ENCODE measurements at regions of chr9 and their contacts with region 1.

Region 1: DNA sequence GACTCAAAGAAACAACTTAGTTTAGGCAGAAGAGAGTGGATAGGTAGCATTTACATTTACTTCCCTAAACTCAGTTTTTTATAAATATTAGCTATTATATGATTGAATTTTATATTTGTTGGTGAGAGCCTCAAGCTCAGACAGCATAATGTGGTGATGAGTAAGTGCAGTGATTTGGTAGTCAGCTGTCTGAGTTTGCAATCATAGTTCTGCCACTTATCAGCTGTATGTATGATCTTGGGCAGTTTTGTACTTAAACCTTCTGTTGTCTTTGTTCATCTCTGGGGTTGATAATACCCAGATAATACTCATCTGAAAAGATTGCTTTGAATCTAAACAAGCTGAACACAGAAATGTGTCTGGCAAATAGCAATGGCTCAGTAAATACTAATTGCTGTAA is 108.8 kb downstream of the ANXA1 start:
- DNase-seq: no peak
- ATAC-seq: no peak
- H3K4me3 ChIP-seq: no peak overlapping the region
- H3K4me3 Mint-ChIP-seq: no peak overlapping the region
- H3K27ac ChIP-seq: no peak overlapping the region
- H3K27ac Mint-ChIP-seq: no peak overlapping the region
- H3K4me1 ChIP-seq: no peaks in the 10 kb centered on the region
- H3K4me1 Mint-ChIP-seq: no peaks in the 10 kb centered on the region
- H3K27me3 ChIP-seq: no peaks in the 10 kb centered on the region
- H3K27me3 Mint-ChIP-seq: peaks cover 0 to 10% of the 10 kb centered on the region in 2 donors

Region 2: DNA sequence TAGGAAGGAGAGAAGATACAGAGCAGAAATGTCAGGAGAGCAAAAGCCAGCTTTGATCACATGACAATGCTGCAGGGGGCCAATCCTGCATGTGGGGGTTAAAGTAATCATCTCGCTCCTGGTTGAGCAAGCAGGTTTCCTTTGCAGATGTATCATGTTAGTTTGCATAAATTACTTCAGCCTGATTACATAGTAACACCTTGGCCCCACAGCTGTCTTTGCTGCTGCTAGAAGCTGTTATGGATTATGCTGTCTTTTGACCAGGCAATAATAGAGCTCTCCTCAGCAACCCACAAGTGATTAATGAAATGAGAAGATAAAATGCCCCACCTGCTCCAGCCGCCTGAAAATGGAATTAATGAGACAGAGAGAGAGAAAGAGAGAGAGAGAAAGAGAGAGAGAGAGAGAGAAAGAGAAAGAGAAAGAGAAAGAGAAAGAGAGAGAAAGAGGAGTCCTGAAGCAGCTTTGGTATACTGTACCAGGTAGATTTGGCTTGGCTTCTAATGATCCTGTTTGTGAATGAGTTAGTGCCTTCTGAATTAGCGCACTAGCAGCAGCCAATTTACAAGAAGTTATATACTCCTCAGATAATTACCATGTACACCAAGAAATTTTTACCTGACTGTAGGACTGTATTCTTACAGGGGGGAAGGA is 1062.3 kb after region 1 on chr9:
- CTCF ChIA-PET with region 1: no interaction called
- POLR2A ChIA-PET with region 1: interaction called in 1 of 2 experiments, 10 read pairs
- DNase-seq: peak in 1 of 35 experiments; percentile 13
- ATAC-seq: no peak
- H3K4me3 ChIP-seq: no peak overlapping the region
- H3K4me3 Mint-ChIP-seq: peak overlapping the region in 2 of 3 donors; percentile 5 to 25
- H3K27ac ChIP-seq: peak overlapping the region; percentile 25
- H3K27ac Mint-ChIP-seq: no peak overlapping the region
- H3K4me1 ChIP-seq: no peaks in the 10 kb centered on the region
- H3K4me1 Mint-ChIP-seq: peaks cover 0 to 6% (median 0%) of the 10 kb centered on the region in 3 donors
- H3K27me3 ChIP-seq: no peaks in the 10 kb centered on the region
- H3K27me3 Mint-ChIP-seq: no peaks in the 10 kb centered on the region

Measured in T-cell (primary cell).